IMR-90 (cell line): ENCODE measurements at regions of chr21 and their contacts with region 1.

Region 1: DNA sequence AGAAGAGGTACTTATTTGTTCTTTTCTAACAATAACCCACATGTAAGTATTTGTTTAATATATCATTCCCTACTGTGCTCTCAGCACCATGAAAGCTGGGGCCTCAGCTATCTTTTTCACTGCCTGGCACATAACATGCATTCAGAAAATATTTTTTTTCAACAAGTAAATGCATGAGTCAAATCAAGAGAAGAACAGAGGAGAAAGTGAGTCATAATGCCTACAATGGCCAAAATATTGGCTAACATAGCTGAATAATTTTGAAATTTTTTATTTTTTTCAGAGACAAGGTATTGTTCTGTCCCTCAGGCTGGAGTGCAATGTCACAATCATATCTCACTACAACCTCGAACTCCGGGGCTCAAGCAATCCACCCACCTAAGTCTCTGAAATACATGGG is 252.2 kb upstream of the ADAMTS5 start:
- DNase-seq: peak; percentile 58
- ATAC-seq: peak; percentile 40; the same call in 1 of the 2 replicates
- H3K4me3 ChIP-seq: no peak overlapping the region
- H3K27ac ChIP-seq: no peak overlapping the region
- H3K4me1 ChIP-seq: peaks cover 2% of the 10 kb centered on the region; the same call in 1 of the 2 replicates
- H3K27me3 ChIP-seq: no peaks in the 10 kb centered on the region
- CTCF ChIP-seq: no peak
- POLR2A ChIP-seq: no peak
- RAD21 ChIP-seq: no peak

Region 2: DNA sequence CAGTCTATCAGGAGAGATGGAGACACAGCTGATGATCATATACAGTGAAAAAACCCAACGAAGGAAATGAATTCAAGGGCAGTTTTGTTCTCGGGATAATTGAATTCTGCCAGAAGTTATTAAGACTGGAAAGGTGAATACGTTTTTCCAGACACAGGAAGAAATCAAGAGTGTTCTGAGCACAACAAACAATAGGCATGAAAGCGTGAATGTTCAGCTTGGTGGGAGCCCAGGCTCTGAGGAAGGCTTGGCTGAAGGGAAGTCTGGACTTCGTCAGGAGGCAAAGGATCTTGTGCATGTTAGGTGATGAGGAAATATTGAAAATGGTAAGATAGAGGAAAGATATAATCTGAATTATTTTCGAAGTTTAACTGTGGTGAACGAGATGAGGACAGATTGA is 696.4 kb before region 1 on chr21:
- CTCF ChIA-PET with region 1: no interaction called
- POLR2A ChIA-PET with region 1: no interaction called
- dilution Hi-C with region 1: no loop called
- in situ Hi-C with region 1: no loop called
- intact Hi-C with region 1: no loop called
- DNase-seq: no peak
- ATAC-seq: no peak
- H3K4me3 ChIP-seq: no peak overlapping the region
- H3K27ac ChIP-seq: no peak overlapping the region
- H3K4me1 ChIP-seq: no peaks in the 10 kb centered on the region
- H3K27me3 ChIP-seq: no peaks in the 10 kb centered on the region
- CTCF ChIP-seq: no peak
- POLR2A ChIP-seq: no peak
- RAD21 ChIP-seq: no peak

Region 3: DNA sequence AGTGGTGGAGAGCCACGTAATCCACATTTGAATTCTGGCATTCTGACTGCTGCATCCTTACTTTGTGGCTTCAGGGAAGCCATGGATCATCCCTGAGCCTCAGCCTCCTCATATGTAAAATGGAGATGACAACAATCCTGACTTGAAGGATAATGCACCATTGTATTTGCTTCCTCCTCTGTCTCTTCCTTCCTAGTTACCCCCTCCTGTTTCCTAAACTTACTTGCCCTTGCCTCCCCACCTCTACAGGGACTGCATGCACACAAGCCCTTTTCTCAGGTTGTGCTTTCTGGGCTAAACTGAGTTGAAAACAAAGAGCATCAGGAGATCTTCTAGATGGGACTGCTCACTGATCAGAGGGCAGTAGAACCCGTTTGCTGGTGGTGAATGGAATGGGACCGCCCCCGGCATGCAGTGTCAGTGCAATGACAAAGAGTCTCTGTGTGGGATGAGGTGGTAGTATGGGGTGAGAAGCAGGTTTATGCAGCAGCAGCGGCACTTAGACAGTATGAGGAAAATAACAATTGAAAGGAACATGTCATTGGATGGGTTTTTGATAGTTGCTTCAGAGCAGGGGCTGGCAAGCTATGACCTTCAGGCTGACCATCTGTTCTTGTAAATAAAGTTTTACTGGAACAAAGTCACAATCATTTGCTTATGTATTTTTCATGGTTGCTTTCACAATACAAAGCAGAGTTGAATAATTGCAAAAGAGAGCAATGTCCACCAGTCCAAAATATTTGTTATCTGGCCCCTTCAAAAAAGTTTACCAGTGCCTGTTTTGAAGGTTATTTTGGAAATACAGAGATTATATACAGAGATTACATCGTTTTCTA is 367.7 kb before region 1 on chr21:
- CTCF ChIA-PET with region 1: no interaction called
- POLR2A ChIA-PET with region 1: no interaction called
- dilution Hi-C with region 1: no loop called
- in situ Hi-C with region 1: no loop called
- intact Hi-C with region 1: no loop called
- DNase-seq: no peak
- ATAC-seq: no peak
- H3K4me3 ChIP-seq: no peak overlapping the region
- H3K27ac ChIP-seq: peak overlapping the region; percentile 16; the same call in 1 of the 2 replicates
- H3K4me1 ChIP-seq: peaks cover 8% of the 10 kb centered on the region
- H3K27me3 ChIP-seq: no peaks in the 10 kb centered on the region
- CTCF ChIP-seq: no peak
- POLR2A ChIP-seq: no peak
- RAD21 ChIP-seq: no peak

Region 4: DNA sequence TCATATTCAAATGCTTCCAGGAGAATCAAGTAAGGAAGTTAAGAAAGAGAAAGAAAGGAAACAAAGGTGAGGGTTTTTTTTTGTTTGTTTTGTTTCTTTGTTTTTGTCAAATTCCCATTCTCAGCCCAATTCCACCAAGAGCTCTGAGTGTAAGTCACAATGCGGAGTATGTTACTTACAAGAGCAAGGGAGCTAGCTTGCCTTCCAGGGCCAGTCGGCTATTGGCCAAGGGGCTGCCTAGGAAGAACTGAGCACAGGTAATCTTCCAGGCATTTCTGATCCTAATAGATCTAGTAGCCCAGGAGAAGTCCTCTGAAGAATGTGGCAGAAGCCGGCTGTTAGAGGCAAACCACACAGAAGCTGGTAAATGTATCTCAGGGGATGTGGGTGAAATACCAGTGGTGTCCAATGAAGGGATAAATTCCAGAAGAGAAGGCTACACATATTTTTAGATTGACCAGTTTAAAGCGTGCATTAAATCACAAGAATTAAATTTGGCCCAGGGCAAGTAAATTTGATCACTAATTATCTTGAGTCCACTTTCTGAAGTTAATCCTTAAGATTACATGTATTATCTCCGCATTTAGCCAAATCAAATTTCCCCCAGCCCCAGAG is 12.6 kb before region 1 on chr21:
- CTCF ChIA-PET with region 1: no interaction called
- POLR2A ChIA-PET with region 1: no interaction called
- dilution Hi-C with region 1: no loop called
- in situ Hi-C with region 1: no loop called
- intact Hi-C with region 1: no loop called
- DNase-seq: peak; percentile 18
- ATAC-seq: peak; percentile 49
- H3K4me3 ChIP-seq: no peak overlapping the region
- H3K27ac ChIP-seq: no peak overlapping the region
- H3K4me1 ChIP-seq: peaks cover 4% of the 10 kb centered on the region; the same call in 1 of the 2 replicates
- H3K27me3 ChIP-seq: no peaks in the 10 kb centered on the region
- CTCF ChIP-seq: no peak
- POLR2A ChIP-seq: no peak
- RAD21 ChIP-seq: no peak

Region 5: GRCh38 chr21:27476696-27477095 is 257.6 kb after region 1 on chr21:
- CTCF ChIA-PET with region 1: no interaction called
- POLR2A ChIA-PET with region 1: no interaction called
- dilution Hi-C with region 1: no loop called
- in situ Hi-C with region 1: no loop called
- intact Hi-C with region 1: loop called (anchors 5 kb)
- DNase-seq: peak; percentile 62
- ATAC-seq: peak; percentile 83
- H3K4me3 ChIP-seq: no peak overlapping the region
- H3K27ac ChIP-seq: no peak overlapping the region
- H3K4me1 ChIP-seq: peaks cover 6% of the 10 kb centered on the region
- H3K27me3 ChIP-seq: no peaks in the 10 kb centered on the region
- CTCF ChIP-seq: peak; percentile 61
- POLR2A ChIP-seq: no peak
- RAD21 ChIP-seq: peak; percentile 74

Region 6: DNA sequence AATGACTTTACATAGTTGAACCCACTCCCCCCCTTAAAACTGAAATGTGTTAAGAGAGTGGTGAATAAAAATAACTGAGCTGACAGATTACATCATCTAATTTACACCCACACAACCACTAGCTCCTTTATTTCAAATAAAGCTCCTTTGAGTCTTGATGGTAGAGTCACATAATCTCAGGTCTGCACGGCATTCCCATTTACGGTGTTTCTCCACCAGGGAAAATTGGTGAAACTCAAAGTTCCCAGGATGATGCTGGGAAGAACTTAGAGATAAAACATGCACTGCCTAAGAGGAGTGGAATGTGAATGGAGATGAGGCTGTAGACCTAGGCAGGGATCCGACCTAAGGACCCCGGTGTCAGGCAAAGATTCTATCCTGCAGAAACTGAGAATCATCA is 475.6 kb after region 1 on chr21:
- CTCF ChIA-PET with region 1: no interaction called
- POLR2A ChIA-PET with region 1: no interaction called
- dilution Hi-C with region 1: no loop called
- in situ Hi-C with region 1: no loop called
- intact Hi-C with region 1: loop called (anchors 5 kb)
- DNase-seq: no peak
- ATAC-seq: no peak
- H3K4me3 ChIP-seq: no peak overlapping the region
- H3K27ac ChIP-seq: no peak overlapping the region
- H3K4me1 ChIP-seq: peaks cover 8% of the 10 kb centered on the region; the same call in 1 of the 2 replicates
- H3K27me3 ChIP-seq: no peaks in the 10 kb centered on the region
- CTCF ChIP-seq: no peak
- POLR2A ChIP-seq: no peak
- RAD21 ChIP-seq: no peak